CD8-positive, alpha-beta memory T cell (primary cell): ENCODE measurements at regions of chr6 and their contacts with region 1.

Region 1: GRCh38 chr6:17803409-17803808 is 96.7 kb upstream of the NUP153 start:
- DNase-seq: no peak
- H3K4me3 ChIP-seq: no peak overlapping the region
- H3K4me3 Mint-ChIP-seq: no peak overlapping the region
- H3K27ac ChIP-seq: no peak overlapping the region
- H3K27ac Mint-ChIP-seq: no peak overlapping the region
- H3K4me1 ChIP-seq: no peaks in the 10 kb centered on the region
- H3K4me1 Mint-ChIP-seq: peaks cover 2 to 8% (median 3%) of the 10 kb centered on the region in 3 donors
- H3K27me3 ChIP-seq: no peaks in the 10 kb centered on the region
- H3K27me3 Mint-ChIP-seq: peaks cover 11 to 44% of the 10 kb centered on the region in 2 donors

Region 2: GRCh38 chr6:17446713-17447112 is 356.7 kb before region 1 on chr6:
- CTCF ChIA-PET with region 1: no interaction called
- POLR2A ChIA-PET with region 1: no interaction called
- DNase-seq: no peak
- H3K4me3 ChIP-seq: no peak overlapping the region
- H3K4me3 Mint-ChIP-seq: no peak overlapping the region
- H3K27ac ChIP-seq: no peak overlapping the region
- H3K27ac Mint-ChIP-seq: peak overlapping the region in 1 of 8 donors; percentile 44
- H3K4me1 ChIP-seq: no peaks in the 10 kb centered on the region
- H3K4me1 Mint-ChIP-seq: no peaks in the 10 kb centered on the region
- H3K27me3 ChIP-seq: no peaks in the 10 kb centered on the region
- H3K27me3 Mint-ChIP-seq: peaks cover 2 to 3% of the 10 kb centered on the region in 2 donors

Region 3: DNA sequence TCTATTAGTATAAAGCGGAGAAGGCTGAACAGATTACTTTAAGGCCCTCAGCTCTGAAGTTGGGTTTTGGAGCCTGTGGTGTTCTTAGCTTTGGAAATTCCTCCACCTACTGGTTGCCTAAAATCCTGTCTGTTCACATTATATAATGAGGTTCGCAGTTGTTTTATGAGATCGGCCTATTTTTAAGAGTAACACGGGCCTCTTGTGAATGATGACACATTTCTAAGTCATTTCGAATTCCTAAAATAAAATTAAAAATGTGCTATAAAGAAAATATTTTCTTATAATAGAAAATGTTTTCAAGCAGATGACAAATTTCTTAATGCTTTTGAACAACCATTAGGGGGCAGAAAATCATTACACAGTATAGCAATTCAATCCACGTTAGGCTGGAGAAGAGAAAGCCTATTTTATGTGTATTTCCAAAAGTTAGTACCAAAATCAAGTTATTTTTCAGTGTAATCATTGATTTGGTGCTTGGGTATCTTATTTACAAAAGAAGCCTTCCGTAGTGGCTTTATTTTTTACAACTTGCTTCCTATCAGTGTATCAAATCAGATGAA is 219.1 kb before region 1 on chr6:
- CTCF ChIA-PET with region 1: interaction called, 24 read pairs
- POLR2A ChIA-PET with region 1: no interaction called
- DNase-seq: peak in 2 of 5 donors; percentile 32 to 50
- H3K4me3 ChIP-seq: no peak overlapping the region
- H3K4me3 Mint-ChIP-seq: peak overlapping the region in 1 of 7 donors; percentile 9
- H3K27ac ChIP-seq: no peak overlapping the region
- H3K27ac Mint-ChIP-seq: peak overlapping the region in 1 of 8 donors; percentile 14
- H3K4me1 ChIP-seq: peaks cover 5% of the 10 kb centered on the region
- H3K4me1 Mint-ChIP-seq: peaks cover 11 to 12% (median 12%) of the 10 kb centered on the region in 3 donors
- H3K27me3 ChIP-seq: no peaks in the 10 kb centered on the region
- H3K27me3 Mint-ChIP-seq: peaks cover 2 to 16% of the 10 kb centered on the region in 2 donors

Region 4: GRCh38 chr6:17700421-17701416 is 102.7 kb before region 1 on chr6:
- CTCF ChIA-PET with region 1: interaction called, 21 read pairs
- POLR2A ChIA-PET with region 1: no interaction called
- DNase-seq: no peak
- H3K4me3 ChIP-seq: no peak overlapping the region
- H3K4me3 Mint-ChIP-seq: peak overlapping the region in 3 of 7 donors; percentile 24 to 44 (median 38)
- H3K27ac ChIP-seq: no peak overlapping the region
- H3K27ac Mint-ChIP-seq: peak overlapping the region in 7 of 8 donors; percentile 16 to 91 (median 47)
- H3K4me1 ChIP-seq: peaks cover 52% of the 10 kb centered on the region
- H3K4me1 Mint-ChIP-seq: peaks cover 49 to 74% (median 74%) of the 10 kb centered on the region in 3 donors
- H3K27me3 ChIP-seq: no peaks in the 10 kb centered on the region
- H3K27me3 Mint-ChIP-seq: no peaks in the 10 kb centered on the region

Region 5: GRCh38 chr6:17820055-17820454 is 16.6 kb after region 1 on chr6:
- CTCF ChIA-PET with region 1: interaction called, 12 read pairs
- POLR2A ChIA-PET with region 1: no interaction called
- DNase-seq: no peak
- H3K4me3 ChIP-seq: no peak overlapping the region
- H3K4me3 Mint-ChIP-seq: no peak overlapping the region
- H3K27ac ChIP-seq: peak overlapping the region; percentile 30
- H3K27ac Mint-ChIP-seq: no peak overlapping the region
- H3K4me1 ChIP-seq: no peaks in the 10 kb centered on the region
- H3K4me1 Mint-ChIP-seq: no peaks in the 10 kb centered on the region
- H3K27me3 ChIP-seq: no peaks in the 10 kb centered on the region
- H3K27me3 Mint-ChIP-seq: peaks cover 2 to 18% of the 10 kb centered on the region in 2 donors